Sigmoid colon (tissue), 7 donors: ENCODE measurements at regions of chr16 and their contacts with region 1.

Region 1: GRCh38 chr16:66751303-66751991 is at the start of gene DYNC1LI2:
- DNase-seq: peak; percentile 88
- H3K4me3 ChIP-seq: peak within 1 kb of the TSS; percentile 78 to 96 (median 94)
- H3K27ac ChIP-seq: peak within 1 kb of the TSS; percentile 87 to 96 (median 90)
- H3K4me1 ChIP-seq: peaks cover 0 to 48% (median 43%) of the 10 kb centered on the region in 4 donors
- H3K27me3 ChIP-seq: no peaks in the 10 kb centered on the region
- CTCF ChIP-seq: peak in 1 of 4 experiments; percentile 84
- EP300 ChIP-seq: no peak
- POLR2A ChIP-seq: no peak
- total RNA-seq, gene DYNC1LI2: 164 to 327 (median 261) TPM

Region 2: GRCh38 chr16:66406534-66407221 is 344.8 kb before region 1 on chr16:
- intact Hi-C with region 1: loop called (anchors 10 kb)
- DNase-seq: peak; percentile 90
- H3K4me3 ChIP-seq: peak overlapping the region; percentile 26 to 53 (median 46)
- H3K27ac ChIP-seq: peak overlapping the region in 1 of 4 donors; percentile 27
- H3K4me1 ChIP-seq: peaks cover 0 to 8% (median 7%) of the 10 kb centered on the region in 4 donors
- H3K27me3 ChIP-seq: peaks cover 0 to 22% (median 3%) of the 10 kb centered on the region in 3 donors
- CTCF ChIP-seq: peak; percentile 66 to 92 (median 80)
- EP300 ChIP-seq: no peak
- POLR2A ChIP-seq: no peak

Region 3: GRCh38 chr16:66608241-66609138 is 143.0 kb before region 1 on chr16:
- intact Hi-C with region 1: loop called (anchors 5 kb)
- DNase-seq: peak; percentile 91
- H3K4me3 ChIP-seq: no peak overlapping the region
- H3K27ac ChIP-seq: peak overlapping the region; percentile 1 to 48 (median 32)
- H3K4me1 ChIP-seq: peaks cover 0 to 33% (median 29%) of the 10 kb centered on the region in 4 donors
- H3K27me3 ChIP-seq: peaks cover 0 to 21% (median 13%) of the 10 kb centered on the region in 3 donors
- CTCF ChIP-seq: peak; percentile 58 to 84 (median 70)
- EP300 ChIP-seq: no peak
- POLR2A ChIP-seq: no peak

Region 4: GRCh38 chr16:66660422-66661209 is 90.8 kb before region 1 on chr16:
- intact Hi-C with region 1: loop called (anchors 5 kb)
- DNase-seq: peak; percentile 87
- H3K4me3 ChIP-seq: no peak overlapping the region
- H3K27ac ChIP-seq: peak overlapping the region; percentile 67 to 80 (median 74)
- H3K4me1 ChIP-seq: peaks cover 0 to 35% (median 27%) of the 10 kb centered on the region in 4 donors
- H3K27me3 ChIP-seq: no peaks in the 10 kb centered on the region
- CTCF ChIP-seq: peak in 1 of 4 experiments; percentile 10
- EP300 ChIP-seq: no peak
- POLR2A ChIP-seq: no peak